ENCODE measurements at regions of chr12 and their contacts with region 1.

Region 1: GRCh38 chr12:119444456-119445044 is 110.0 kb downstream of the CCDC60 start:
- DNase-seq: peak; percentile 83
- ATAC-seq: peak; percentile 54
- H3K4me3 ChIP-seq: no peak overlapping the region
- H3K27ac ChIP-seq: no peak overlapping the region
- H3K4me1 ChIP-seq: peaks cover 19% of the 10 kb centered on the region
- H3K27me3 ChIP-seq: peaks cover 39% of the 10 kb centered on the region
- CTCF ChIP-seq: peak; percentile 99

Region 2: GRCh38 chr12:119544765-119545625 is 100.4 kb after region 1 on chr12:
- CTCF ChIA-PET with region 1: interaction called, 9 read pairs
- POLR2A ChIA-PET with region 1: no interaction called
- intact Hi-C with region 1: loop called (anchors 1 kb)
- DNase-seq: peak; percentile 85
- ATAC-seq: peak; percentile 94
- H3K4me3 ChIP-seq: no peak overlapping the region
- H3K27ac ChIP-seq: no peak overlapping the region
- H3K4me1 ChIP-seq: no peaks in the 10 kb centered on the region
- H3K27me3 ChIP-seq: peaks cover 26% of the 10 kb centered on the region
- CTCF ChIP-seq: peak; percentile 93

Region 3: DNA sequence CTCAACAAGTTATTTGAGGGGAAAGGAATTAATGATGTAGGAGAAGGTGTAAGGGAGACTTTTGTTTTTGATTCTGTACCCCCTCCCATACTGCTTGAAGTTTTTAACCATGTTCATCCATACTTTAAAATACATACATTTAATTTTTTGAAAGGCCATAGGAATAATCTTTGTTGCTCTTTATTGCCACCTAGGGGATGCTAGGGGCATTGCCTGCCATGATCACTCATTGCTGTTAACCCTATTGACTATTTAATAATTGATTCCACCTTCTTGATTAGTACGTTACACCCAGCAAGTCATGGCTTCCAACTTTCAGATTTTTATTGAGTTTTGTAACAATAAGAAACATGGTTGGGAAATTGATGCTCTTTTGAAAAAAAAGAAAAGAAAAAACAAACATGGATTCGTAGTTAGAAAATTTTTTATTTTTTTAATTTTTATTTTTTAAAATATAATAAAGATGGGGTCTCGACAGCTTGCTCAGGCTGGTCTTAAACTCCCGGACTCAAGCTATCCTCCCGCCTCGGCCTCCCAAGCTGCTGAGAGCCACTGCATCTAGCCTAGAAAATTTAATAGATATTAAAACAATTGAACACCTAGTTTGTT is 214.8 kb after region 1 on chr12:
- CTCF ChIA-PET with region 1: no interaction called
- POLR2A ChIA-PET with region 1: no interaction called
- intact Hi-C with region 1: loop called (anchors 5 kb)
- DNase-seq: peak; percentile 71
- ATAC-seq: peak; percentile 45
- H3K4me3 ChIP-seq: no peak overlapping the region
- H3K27ac ChIP-seq: no peak overlapping the region
- H3K4me1 ChIP-seq: no peaks in the 10 kb centered on the region
- H3K27me3 ChIP-seq: 0 out of 2 replicates have a peak, but pooled peaks cover 5% of the 10 kb centered on the region
- CTCF ChIP-seq: peak; percentile 88

Region 4: GRCh38 chr12:119667577-119668323 is 223.2 kb after region 1 on chr12 and contains the start of gene PRKAB1:
- CTCF ChIA-PET with region 1: interaction called, 11 read pairs
- POLR2A ChIA-PET with region 1: no interaction called
- intact Hi-C with region 1: no loop called
- DNase-seq: peak; percentile 99
- ATAC-seq: peak; percentile 95
- H3K4me3 ChIP-seq: peak within 1 kb of the TSS; percentile 92
- H3K27ac ChIP-seq: peak within 1 kb of the TSS; percentile 82
- H3K4me1 ChIP-seq: peaks cover 22% of the 10 kb centered on the region
- H3K27me3 ChIP-seq: no peaks in the 10 kb centered on the region
- CTCF ChIP-seq: peak; percentile 97
- total RNA-seq, gene PRKAB1: 16.0 and 16.2 TPM in 2 replicates